ENCODE measurements at regions of chr12 and their contacts with region 1.

Region 1: DNA sequence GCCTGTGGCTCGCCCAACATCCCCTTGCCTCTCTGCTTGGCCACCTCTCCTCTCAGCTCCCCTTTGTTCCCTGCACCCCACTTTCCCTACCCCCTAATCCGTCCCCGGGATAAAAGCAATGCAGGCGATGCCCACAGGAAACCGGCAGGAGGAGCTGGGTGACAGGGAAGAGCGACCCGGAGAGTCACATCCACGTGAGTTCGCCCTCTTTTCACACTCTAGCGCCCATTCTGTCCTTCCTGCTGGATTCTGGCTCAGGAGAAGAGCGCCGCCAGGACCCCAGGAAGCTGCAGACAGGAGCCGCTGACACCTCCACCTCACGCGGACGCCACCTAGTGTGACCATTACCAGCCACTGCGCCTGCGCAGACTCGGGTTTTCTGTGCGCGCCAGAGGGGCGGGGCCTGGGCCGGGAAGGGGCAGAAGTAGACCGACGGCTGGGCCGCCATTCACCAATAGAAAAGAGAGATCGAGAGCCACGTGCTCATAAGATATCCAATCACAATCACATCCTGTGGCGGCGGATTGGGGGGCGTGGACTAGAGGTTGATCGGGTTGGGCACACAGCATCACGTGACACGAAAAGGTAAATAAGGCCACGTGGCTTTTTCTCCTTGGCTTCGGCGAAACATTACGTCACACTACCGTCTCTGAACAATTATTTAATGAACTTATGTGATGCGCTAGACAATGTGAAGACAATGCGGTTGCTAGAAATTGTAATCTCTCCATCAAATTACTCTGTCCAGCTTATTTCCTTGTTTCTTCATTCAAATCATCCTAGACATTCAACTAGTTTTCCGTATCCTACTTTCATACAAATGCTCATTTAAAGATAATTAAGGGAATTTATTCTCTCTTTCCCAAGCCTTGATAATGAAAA is 10.1 kb downstream of the PLA2G1B start:
- DNase-seq: peak; percentile 99
- ATAC-seq: peak; percentile 100
- H3K4me3 ChIP-seq: peak overlapping the region; percentile 78
- H3K27ac ChIP-seq: peak overlapping the region; percentile 47
- H3K4me1 ChIP-seq: peaks cover 3% of the 10 kb centered on the region
- H3K27me3 ChIP-seq: peaks cover 14% of the 10 kb centered on the region
- CTCF ChIP-seq: peak; percentile 53
- POLR2A ChIP-seq: peak; percentile 71; the same call in 1 of the 2 replicates
- RAD21 ChIP-seq: no peak

Region 2: DNA sequence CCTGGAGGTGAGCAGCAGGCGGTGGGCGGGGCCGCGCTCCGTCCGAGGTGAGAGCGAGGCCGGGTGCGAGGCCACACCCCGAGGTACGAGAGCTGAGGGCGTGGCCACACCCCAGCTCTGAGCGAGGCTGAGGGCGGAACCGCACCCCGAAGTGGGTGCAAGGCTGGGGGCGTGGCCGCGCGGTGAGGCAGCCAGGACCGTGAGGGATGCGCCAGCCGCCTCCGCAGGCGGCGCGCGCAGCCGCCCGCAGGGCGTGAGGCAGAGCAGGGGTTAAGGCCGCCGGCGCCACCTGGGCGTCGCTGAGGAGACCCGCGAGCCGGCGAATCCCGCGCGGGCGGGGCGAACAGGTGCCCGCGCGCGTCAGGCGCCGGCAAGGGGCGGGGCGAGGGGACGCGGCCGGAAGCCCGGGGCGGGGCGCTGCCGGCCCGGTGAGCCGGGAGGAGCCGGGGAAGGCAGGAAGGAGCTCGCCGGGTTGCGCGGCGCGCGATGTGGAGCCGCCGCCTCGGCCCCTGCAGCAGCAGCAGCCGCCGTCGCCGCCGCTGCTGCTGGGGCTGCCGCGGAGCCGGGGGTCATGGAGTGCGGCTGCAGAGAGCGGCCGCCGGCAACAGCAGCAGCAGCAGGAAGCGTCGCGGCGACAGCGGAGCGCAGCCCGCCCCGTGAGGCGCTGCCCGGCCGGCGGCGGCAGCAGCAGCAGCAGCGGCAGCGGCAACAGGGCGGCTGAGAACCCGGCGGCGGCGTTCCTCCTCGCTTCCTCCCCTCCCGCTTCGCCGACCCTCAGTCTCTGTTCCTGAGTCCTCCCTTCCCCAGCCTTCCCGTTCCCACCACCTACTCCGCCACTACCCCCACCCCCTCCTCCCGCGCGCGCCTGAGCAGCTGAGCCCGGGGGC is 328.4 kb before region 1 on chr12 and contains the start of gene BICDL1:
- CTCF ChIA-PET with region 1: no interaction called
- POLR2A ChIA-PET with region 1: no interaction called
- dilution Hi-C with region 1: no loop called
- in situ Hi-C with region 1: no loop called
- intact Hi-C with region 1: no loop called
- DNase-seq: peak; percentile 23
- ATAC-seq: peak; percentile 78
- H3K4me3 ChIP-seq: peak within 1 kb of the TSS; percentile 44
- H3K27ac ChIP-seq: no peak within 1 kb of the TSS
- H3K4me1 ChIP-seq: peaks cover 3% of the 10 kb centered on the region; the same call in 1 of the 2 replicates
- H3K27me3 ChIP-seq: peaks cover 24% of the 10 kb centered on the region
- CTCF ChIP-seq: no peak
- POLR2A ChIP-seq: no peak
- RAD21 ChIP-seq: no peak
- total RNA-seq, gene BICDL1: not detected in 2 replicates

Region 3: DNA sequence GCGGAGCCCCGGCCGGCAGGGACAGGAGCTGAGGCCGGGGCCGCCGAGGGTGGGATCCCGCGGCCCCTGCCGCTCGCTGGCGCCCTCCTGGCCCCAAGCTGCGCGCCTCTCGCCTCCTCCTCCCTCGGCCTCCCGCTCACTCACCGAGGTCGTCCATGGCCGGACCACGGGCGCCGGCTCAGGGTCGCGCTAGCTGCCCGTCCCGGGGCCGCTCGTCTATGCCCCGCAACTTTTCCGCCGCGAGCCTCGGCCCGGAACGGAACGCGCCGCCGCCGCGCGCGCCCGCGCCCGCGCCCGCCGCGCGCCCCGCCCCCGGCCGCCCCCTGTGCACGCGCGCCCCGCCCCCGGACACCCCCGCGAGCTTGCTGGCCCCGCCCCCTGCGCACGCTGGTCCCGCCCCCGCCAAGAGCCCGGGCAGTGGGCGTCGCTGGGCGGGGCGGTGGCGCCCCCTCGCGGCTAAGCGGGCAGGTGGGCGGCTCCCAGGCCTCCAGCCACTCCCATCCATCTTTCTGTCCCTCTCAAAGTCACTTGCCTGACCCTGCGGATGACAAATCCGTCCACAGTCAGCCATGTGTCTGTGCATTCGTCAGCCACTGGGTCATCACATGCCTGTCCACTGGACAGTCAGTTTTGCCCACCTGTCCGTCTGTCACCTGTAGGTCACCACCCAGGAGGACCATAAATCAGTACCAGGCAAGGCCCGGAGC is 51.8 kb before region 1 on chr12 and contains the start of gene PXN:
- CTCF ChIA-PET with region 1: no interaction called
- POLR2A ChIA-PET with region 1: no interaction called
- dilution Hi-C with region 1: no loop called
- in situ Hi-C with region 1: no loop called
- intact Hi-C with region 1: no loop called
- DNase-seq: peak; percentile 72
- ATAC-seq: peak; percentile 87
- H3K4me3 ChIP-seq: peak within 1 kb of the TSS; percentile 98
- H3K27ac ChIP-seq: peak within 1 kb of the TSS; percentile 97
- H3K4me1 ChIP-seq: peaks cover 19% of the 10 kb centered on the region
- H3K27me3 ChIP-seq: no peaks in the 10 kb centered on the region
- CTCF ChIP-seq: peak; percentile 91
- POLR2A ChIP-seq: 0 out of 2 replicates have a peak, but pooled peaks have one; percentile 28
- RAD21 ChIP-seq: peak; percentile 91
- total RNA-seq, gene PXN: 33.9 and 46.6 TPM in 2 replicates

Region 4: GRCh38 chr12:120301962-120302815 is 15.3 kb before region 1 on chr12 and contains the start of gene SIRT4:
- CTCF ChIA-PET with region 1: interaction called, 6 read pairs
- POLR2A ChIA-PET with region 1: no interaction called
- dilution Hi-C with region 1: no loop called
- in situ Hi-C with region 1: no loop called
- intact Hi-C with region 1: loop called (anchors 1 kb)
- DNase-seq: peak; percentile 94
- ATAC-seq: peak; percentile 99
- H3K4me3 ChIP-seq: peak within 1 kb of the TSS; percentile 61
- H3K27ac ChIP-seq: peak within 1 kb of the TSS; percentile 53
- H3K4me1 ChIP-seq: no peaks in the 10 kb centered on the region; the same call in 1 of the 2 replicates
- H3K27me3 ChIP-seq: no peaks in the 10 kb centered on the region
- CTCF ChIP-seq: peak; percentile 94
- POLR2A ChIP-seq: no peak
- RAD21 ChIP-seq: peak; percentile 24
- total RNA-seq, gene SIRT4: 0.83 and 2.0 TPM in 2 replicates

Measured in IMR-90 (cell line).